ENCODE measurements at regions of chr17 and their contacts with region 1.

Region 1: DNA sequence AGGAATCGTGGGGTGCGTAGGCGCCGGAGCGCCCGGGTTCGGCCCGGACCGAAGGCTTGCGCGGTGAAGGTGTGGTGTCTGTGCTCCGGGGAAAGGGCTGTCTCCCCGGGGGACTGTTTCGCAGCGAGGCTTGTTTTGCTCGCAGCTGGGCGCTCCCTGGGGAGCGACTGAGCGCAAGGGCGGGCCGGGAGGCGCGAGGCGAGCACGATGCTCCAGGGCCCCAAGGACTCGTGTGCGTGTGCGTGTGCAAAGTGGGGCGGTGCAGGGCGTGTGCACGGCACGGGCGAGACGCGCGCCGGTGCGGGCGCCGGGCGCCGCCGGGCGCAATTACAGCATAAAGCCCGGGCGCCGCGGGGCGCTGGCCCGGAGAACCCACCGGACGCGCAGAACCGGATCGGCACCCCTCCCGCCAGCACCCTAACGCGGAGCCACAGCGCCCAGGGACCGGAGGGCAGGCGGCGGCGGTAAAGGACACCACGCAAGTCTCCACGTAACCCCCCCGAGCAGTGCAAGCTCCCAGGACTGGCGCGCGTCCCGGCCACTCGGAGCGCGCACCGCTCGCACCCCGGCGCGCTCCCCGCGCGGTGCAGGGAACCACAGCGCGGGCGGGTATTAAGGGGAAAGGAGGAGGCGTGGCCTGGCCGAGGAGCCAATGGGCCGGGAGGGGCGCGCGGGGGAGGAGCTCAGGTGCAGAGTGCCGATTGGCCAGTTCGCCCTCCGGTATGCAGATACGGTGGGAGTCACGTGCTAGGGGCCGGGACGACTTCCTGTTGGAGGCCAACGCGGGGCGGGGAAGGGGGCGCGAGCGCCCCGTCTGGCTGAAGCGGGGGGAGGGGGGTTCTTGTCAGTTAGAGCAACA is at the start of gene TNRC6C:
- DNase-seq: peak; percentile 100
- ATAC-seq: peak; percentile 81
- H3K4me3 ChIP-seq: peak within 1 kb of the TSS; percentile 73 to 82 (median 77)
- H3K4me3 Mint-ChIP-seq: peak within 1 kb of the TSS; percentile 95
- H3K27ac ChIP-seq: peak within 1 kb of the TSS; percentile 74 to 85
- H3K27ac Mint-ChIP-seq: peak within 1 kb of the TSS; percentile 97
- H3K4me1 ChIP-seq: peaks cover 27 to 28% of the 10 kb centered on the region in 2 donors
- H3K4me1 Mint-ChIP-seq: peaks cover 44% of the 10 kb centered on the region
- H3K27me3 ChIP-seq: peaks cover 0 to 22% (median 11%) of the 10 kb centered on the region in 4 experiments
- H3K27me3 Mint-ChIP-seq: peaks cover 21% of the 10 kb centered on the region
- CTCF ChIP-seq: no peak
- total RNA-seq, gene TNRC6C: 63.8 and 66.8 TPM in 2 replicates

Region 2: DNA sequence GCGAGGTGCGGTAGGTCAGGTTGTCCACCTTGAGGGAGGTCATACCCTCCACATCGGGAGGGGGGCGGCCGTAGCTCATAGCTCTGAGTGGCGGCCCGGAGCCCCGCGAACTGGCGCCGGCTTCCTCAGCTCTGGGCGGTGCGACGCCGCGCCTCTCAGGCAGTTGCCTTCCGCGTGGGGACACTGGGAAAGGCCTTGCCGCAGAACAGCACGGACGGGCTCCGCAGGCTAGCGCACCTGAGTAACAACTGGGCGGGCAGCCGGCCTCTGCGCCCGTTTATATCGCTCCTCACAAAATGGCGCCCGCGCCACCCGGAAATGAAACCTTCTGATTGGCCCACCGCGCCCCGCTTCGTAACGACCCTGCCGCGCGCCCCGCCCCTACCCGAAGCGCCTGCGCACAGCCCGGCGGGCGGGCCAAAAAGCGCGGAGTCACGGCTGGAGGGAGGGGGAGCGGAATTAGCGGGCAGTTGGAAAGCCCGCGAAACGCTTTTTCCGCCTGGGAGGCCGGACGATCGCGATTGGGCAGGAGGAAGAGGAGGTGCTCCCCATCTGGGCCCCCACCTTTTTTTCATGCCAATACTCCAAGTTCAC is 1220.9 kb before region 1 on chr17 and contains the start of gene SRSF2:
- CTCF ChIA-PET with region 1: no interaction called
- POLR2A ChIA-PET with region 1: interaction called, 7 read pairs
- intact Hi-C with region 1: loop called (anchors 5 kb)
- DNase-seq: peak; percentile 99
- ATAC-seq: peak; percentile 76
- H3K4me3 ChIP-seq: peak within 1 kb of the TSS; percentile 95 to 99 (median 97)
- H3K4me3 Mint-ChIP-seq: peak within 1 kb of the TSS; percentile 97
- H3K27ac ChIP-seq: peak within 1 kb of the TSS; percentile 95 to 97
- H3K27ac Mint-ChIP-seq: peak within 1 kb of the TSS; percentile 99
- H3K4me1 ChIP-seq: peaks cover 35 to 36% of the 10 kb centered on the region in 2 donors
- H3K4me1 Mint-ChIP-seq: peaks cover 53% of the 10 kb centered on the region
- H3K27me3 ChIP-seq: no peaks in the 10 kb centered on the region
- H3K27me3 Mint-ChIP-seq: no peaks in the 10 kb centered on the region
- CTCF ChIP-seq: no peak
- total RNA-seq, gene SRSF2: 356 and 362 TPM in 2 replicates

Region 3: DNA sequence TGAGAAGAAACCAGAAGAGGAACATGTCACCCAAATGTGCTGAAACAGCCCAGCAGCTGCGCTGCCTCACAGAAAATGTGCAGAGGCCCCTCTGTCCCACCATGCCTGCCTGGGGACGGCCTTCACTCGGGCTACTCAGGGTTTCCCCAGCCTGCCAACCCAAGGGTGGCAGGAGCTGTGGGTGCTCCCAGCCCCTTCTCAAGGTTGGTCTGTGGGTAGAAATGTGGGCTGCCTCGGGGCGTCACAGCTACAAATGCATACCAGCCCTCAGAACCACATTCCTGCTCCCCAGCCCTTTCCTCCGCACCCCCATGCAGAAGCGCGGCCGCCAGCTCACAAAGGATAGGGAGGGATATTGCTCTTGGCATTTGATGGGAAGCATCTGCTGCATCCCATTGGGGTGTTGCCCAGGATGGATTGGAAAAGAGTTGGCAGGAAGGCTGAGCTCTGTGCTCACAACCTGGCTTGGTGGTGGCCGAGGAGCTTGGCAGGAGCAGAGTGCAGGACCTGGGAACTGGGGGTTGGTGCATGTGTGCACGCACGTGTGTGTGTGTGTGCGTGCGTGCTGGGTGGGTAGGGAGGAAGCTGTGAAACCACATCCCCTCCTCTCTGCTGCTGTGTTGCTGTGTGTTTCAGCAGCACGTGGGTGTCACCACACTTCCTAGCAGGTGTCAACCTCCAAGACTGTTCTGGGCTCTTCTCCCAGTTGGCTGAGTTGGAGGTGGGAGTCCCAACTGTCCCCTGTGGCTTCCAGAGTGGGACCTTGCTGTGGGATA is 512.9 kb before region 1 on chr17:
- CTCF ChIA-PET with region 1: interaction called, 4 read pairs
- POLR2A ChIA-PET with region 1: interaction called, 12 read pairs
- intact Hi-C with region 1: loop called (anchors 1 kb)
- DNase-seq: peak; percentile 95
- ATAC-seq: peak; percentile 50
- H3K4me3 ChIP-seq: peak overlapping the region in 4 of 5 experiments; percentile 32 to 54 (median 49)
- H3K4me3 Mint-ChIP-seq: peak overlapping the region; percentile 79
- H3K27ac ChIP-seq: peak overlapping the region; percentile 96 to 100
- H3K27ac Mint-ChIP-seq: peak overlapping the region; percentile 98
- H3K4me1 ChIP-seq: peaks cover 89 to 100% of the 10 kb centered on the region in 2 donors
- H3K4me1 Mint-ChIP-seq: peaks cover 87% of the 10 kb centered on the region
- H3K27me3 ChIP-seq: no peaks in the 10 kb centered on the region
- H3K27me3 Mint-ChIP-seq: no peaks in the 10 kb centered on the region
- CTCF ChIP-seq: no peak

Region 4: DNA sequence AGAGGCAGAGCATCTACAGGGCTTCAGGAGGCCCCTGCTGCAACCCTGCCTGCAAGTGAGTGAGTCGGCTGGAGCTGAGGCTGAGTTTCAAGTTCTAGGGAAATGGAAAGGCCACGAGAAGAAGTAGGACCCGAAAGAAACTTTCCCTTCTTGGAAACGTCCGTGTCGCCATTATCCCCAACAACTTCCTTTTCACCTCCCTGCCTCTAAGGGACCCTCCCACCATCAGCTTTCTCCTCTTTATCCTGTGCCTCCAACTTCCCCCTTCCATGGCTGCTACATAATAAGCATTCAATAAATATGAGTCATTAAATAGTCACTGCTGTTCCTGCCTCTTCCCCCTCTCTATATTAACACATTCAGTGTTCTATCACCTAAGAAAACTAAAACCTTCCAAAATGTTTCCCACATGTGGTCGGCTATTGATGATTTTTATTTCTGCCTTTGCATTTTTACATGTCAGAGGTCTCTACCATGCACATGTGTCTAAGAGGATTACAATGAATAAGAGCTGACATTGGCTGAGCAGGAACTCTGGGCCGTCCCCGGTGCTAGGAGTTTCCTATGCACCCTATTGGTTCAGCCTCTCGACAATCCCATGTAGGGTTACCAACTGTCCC is 115.4 kb before region 1 on chr17:
- CTCF ChIA-PET with region 1: interaction called, 6 read pairs
- POLR2A ChIA-PET with region 1: interaction called, 16 read pairs
- intact Hi-C with region 1: loop called (anchors 2 kb)
- DNase-seq: no peak
- ATAC-seq: no peak
- H3K4me3 ChIP-seq: no peak overlapping the region
- H3K4me3 Mint-ChIP-seq: no peak overlapping the region
- H3K27ac ChIP-seq: no peak overlapping the region
- H3K27ac Mint-ChIP-seq: no peak overlapping the region
- H3K4me1 ChIP-seq: peaks cover 43 to 62% of the 10 kb centered on the region in 2 donors
- H3K4me1 Mint-ChIP-seq: peaks cover 45% of the 10 kb centered on the region
- H3K27me3 ChIP-seq: peaks cover 0 to 71% (median 25%) of the 10 kb centered on the region in 4 experiments
- H3K27me3 Mint-ChIP-seq: peaks cover 50% of the 10 kb centered on the region
- CTCF ChIP-seq: no peak

Region 5: GRCh38 chr17:77875881-77876509 is 82.1 kb before region 1 on chr17:
- CTCF ChIA-PET with region 1: interaction called, 11 read pairs
- POLR2A ChIA-PET with region 1: interaction called, 33 read pairs
- intact Hi-C with region 1: loop called (anchors 1 kb)
- DNase-seq: peak; percentile 77
- ATAC-seq: peak; percentile 96
- H3K4me3 ChIP-seq: no peak overlapping the region
- H3K4me3 Mint-ChIP-seq: peak overlapping the region; percentile 54
- H3K27ac ChIP-seq: peak overlapping the region in 1 of 2 donors; percentile 24
- H3K27ac Mint-ChIP-seq: peak overlapping the region; percentile 86
- H3K4me1 ChIP-seq: peaks cover 58 to 67% of the 10 kb centered on the region in 2 donors
- H3K4me1 Mint-ChIP-seq: peaks cover 62% of the 10 kb centered on the region
- H3K27me3 ChIP-seq: peaks cover 0 to 13% (median 0%) of the 10 kb centered on the region in 4 experiments
- H3K27me3 Mint-ChIP-seq: peaks cover 6% of the 10 kb centered on the region
- CTCF ChIP-seq: no peak

Region 6: DNA sequence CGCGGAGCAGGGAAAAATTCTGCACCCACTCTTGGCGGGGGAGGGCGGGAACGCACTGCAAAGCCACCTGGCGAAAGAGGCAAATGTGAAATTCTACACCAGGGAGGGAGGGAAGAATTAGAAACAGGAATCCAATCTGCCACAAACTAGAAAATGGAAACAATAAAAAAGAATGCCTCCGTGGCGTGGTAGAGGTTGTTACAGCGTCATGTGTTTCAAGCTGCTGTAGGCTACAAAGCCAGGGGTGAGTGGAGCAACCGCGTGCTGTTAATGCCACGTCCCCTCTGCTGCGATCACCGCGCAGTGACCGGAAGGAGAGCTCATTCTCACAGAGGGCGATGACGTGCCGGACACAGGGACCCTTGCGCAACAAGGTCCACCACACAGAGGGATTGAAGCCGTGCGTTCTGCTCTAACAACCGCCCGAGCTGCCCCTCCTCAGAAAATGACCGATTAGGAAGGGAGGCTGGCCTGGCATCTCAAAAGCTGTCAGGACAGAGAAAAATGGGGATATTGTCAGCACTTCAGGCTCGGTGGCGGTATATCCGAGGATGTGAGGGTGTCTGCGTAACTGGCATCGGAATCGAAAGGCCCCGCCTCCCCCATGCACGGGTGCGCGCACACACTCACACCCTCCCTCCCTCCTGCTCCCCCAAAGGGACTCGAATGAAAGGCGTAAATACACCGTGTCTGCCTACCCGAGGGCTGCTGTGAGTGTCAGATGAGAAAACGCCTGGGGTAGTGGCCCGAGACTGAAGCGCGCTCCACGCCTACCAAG is 70.4 kb before region 1 on chr17:
- CTCF ChIA-PET with region 1: interaction called, 8 read pairs
- POLR2A ChIA-PET with region 1: interaction called, 33 read pairs
- intact Hi-C with region 1: no loop called
- DNase-seq: peak; percentile 93
- ATAC-seq: peak; percentile 92
- H3K4me3 ChIP-seq: peak overlapping the region; percentile 37 to 70 (median 58)
- H3K4me3 Mint-ChIP-seq: peak overlapping the region; percentile 81
- H3K27ac ChIP-seq: peak overlapping the region; percentile 9 to 46
- H3K27ac Mint-ChIP-seq: peak overlapping the region; percentile 77
- H3K4me1 ChIP-seq: peaks cover 54 to 60% of the 10 kb centered on the region in 2 donors
- H3K4me1 Mint-ChIP-seq: peaks cover 59% of the 10 kb centered on the region
- H3K27me3 ChIP-seq: peaks cover 0 to 39% (median 20%) of the 10 kb centered on the region in 4 experiments
- H3K27me3 Mint-ChIP-seq: peaks cover 17% of the 10 kb centered on the region
- CTCF ChIP-seq: no peak

Region 7: DNA sequence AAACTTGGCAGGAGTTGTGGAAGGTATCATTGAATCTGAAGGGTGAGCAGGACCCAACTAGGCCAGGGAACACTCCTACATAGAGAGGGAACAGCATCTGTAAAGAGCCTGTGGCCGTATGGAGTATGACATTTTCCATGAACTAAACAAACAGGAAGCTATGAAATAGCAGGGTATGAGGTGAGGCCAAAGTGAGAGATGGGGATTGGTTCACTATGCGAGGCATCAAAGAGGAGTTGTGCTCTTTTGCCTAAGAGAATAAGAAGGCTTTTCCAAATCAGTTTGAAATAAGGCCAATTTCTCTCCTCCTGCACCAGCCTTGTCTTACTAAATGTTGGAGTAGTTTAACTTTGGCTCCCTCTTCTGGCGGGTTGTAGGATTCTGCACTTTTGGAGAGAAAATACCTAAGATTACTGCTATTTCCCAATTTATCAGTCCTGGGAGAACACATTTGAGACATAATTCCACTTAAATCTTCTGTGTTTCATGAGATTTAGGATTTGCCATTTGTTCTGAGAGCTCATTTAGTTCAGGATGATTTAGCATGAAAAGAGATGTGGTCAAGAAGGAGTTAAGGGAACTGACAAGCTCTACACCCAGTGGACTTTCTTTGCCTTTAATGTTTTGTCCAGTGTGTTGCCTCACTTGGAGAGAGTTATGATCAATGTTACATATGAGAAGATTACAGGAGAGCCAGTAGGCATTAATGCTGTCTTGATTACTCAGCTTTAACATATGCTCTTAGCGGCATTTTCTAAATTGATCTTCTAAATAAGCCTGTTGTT is 55.8 kb after region 1 on chr17:
- CTCF ChIA-PET with region 1: interaction called, 8 read pairs
- POLR2A ChIA-PET with region 1: interaction called, 9 read pairs
- intact Hi-C with region 1: loop called (anchors 5 kb)
- DNase-seq: peak; percentile 80
- ATAC-seq: peak; percentile 56
- H3K4me3 ChIP-seq: no peak overlapping the region
- H3K4me3 Mint-ChIP-seq: no peak overlapping the region
- H3K27ac ChIP-seq: no peak overlapping the region
- H3K27ac Mint-ChIP-seq: no peak overlapping the region
- H3K4me1 ChIP-seq: no peaks in the 10 kb centered on the region
- H3K4me1 Mint-ChIP-seq: peaks cover 7% of the 10 kb centered on the region
- H3K27me3 ChIP-seq: no peaks in the 10 kb centered on the region
- H3K27me3 Mint-ChIP-seq: no peaks in the 10 kb centered on the region
- CTCF ChIP-seq: peak; percentile 91

Measured in B cell (primary cell).